ENCODE measurements at regions of chr5 and their contacts with region 1.

Region 1: DNA sequence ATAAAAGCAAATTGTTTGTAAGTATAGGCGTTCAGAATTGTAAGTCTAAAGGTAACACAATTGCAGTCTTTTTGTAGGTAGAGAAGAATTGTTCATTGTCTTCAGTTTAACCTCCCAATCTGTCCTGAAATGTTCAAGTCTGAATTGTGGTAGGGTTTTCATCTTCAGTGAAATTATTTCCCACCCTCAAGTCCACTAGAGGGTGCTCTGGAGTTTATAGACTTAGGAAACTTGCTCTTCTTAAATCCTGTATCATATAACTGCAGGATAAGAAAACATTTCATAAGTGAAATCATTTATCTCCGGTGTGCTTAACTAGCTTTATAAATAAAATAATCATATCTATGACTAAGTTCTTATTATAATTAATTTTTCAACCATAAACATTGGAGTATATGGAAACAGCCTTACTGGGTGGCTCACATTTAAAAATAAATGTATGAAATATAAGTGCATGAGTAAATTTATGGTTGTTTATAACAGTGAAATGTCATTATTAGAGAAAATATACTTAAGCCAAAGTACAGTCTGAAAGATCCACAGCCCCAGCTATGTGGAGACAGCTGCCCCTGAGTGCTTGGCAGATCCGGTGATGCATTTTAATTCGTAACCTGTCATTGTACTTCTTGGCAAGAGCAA is 182.4 kb upstream of the OTULINL start:
- DNase-seq: no peak
- ATAC-seq: peak in 3 of 8 donors; percentile 34 to 58 (median 53)
- H3K4me3 ChIP-seq: no peak overlapping the region
- H3K27ac ChIP-seq: peak overlapping the region in 2 of 10 donors; percentile 40 to 48
- H3K4me1 ChIP-seq: peaks cover 0 to 30% (median 14%) of the 10 kb centered on the region in 9 donors
- H3K27me3 ChIP-seq: no peaks in the 10 kb centered on the region
- CTCF ChIP-seq: peak; percentile 48 to 84 (median 75)

Region 2: GRCh38 chr5:13921578-13921977 is 477.6 kb before region 1 on chr5:
- intact Hi-C with region 1: no loop called
- DNase-seq: no peak
- ATAC-seq: no peak
- H3K4me3 ChIP-seq: no peak overlapping the region
- H3K27ac ChIP-seq: no peak overlapping the region
- H3K4me1 ChIP-seq: no peaks in the 10 kb centered on the region
- H3K27me3 ChIP-seq: no peaks in the 10 kb centered on the region
- CTCF ChIP-seq: no peak

Region 3: GRCh38 chr5:14465116-14465515 is 65.9 kb after region 1 on chr5:
- intact Hi-C with region 1: loop called in 1 of 10 experiments (anchors 5 kb)
- DNase-seq: no peak
- ATAC-seq: no peak
- H3K4me3 ChIP-seq: no peak overlapping the region
- H3K27ac ChIP-seq: peak overlapping the region in 1 of 10 donors; percentile 71
- H3K4me1 ChIP-seq: peaks cover 0 to 25% (median 0%) of the 10 kb centered on the region in 9 donors
- H3K27me3 ChIP-seq: no peaks in the 10 kb centered on the region
- CTCF ChIP-seq: no peak

Region 4: GRCh38 chr5:14489642-14490041 is 90.5 kb after region 1 on chr5:
- intact Hi-C with region 1: loop called in 1 of 10 experiments (anchors 10 kb)
- DNase-seq: no peak
- ATAC-seq: peak in 1 of 8 donors; percentile 19
- H3K4me3 ChIP-seq: no peak overlapping the region
- H3K27ac ChIP-seq: peak overlapping the region in 3 of 10 donors; percentile 4 to 68 (median 49)
- H3K4me1 ChIP-seq: peaks cover 3 to 34% (median 12%) of the 10 kb centered on the region in 9 donors
- H3K27me3 ChIP-seq: no peaks in the 10 kb centered on the region
- CTCF ChIP-seq: no peak

Region 5: DNA sequence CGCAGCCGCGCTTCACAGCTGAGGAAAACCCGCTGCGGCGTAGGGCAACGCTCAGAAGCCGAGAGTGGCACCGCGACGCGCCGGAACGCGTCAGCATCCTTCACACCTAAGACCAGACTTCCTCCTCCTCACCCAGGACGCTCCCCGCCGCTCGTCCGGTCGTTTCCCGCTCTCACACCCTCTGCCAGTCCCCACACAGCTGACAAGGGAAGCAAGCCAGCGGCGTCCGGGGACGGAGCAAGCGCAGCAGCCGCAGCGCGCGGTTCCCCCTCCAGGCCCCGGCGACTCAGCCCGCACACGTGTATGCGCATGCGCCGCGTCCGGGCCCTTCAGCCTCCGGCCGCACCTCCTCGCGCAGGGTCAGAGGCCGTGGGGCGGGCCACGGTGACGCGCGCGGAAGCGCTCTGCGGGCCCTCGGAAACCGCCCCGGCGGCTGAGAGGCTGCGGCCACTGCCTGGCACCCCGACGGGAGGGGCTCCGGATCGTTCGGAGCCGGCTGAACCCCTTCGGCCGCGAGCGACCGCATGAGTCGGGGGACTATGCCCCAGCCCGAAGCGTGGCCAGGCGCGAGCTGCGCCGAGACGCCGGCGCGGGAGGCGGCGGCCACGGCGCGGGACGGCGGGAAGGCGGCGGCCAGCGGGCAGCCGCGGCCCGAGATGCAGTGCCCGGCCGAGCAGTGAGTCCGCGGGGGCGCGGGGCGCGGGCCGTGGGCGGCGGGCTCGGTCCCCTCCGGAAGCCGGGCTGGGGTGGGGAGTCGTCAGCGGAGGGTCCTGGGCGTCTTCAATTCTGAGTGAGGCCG is 265.3 kb after region 1 on chr5 and contains the start of gene OTULIN:
- intact Hi-C with region 1: loop called in 2 of 10 experiments (anchors 5 to 10 kb)
- DNase-seq: peak; percentile 90 to 93
- ATAC-seq: peak; percentile 94 to 98 (median 97)
- H3K4me3 ChIP-seq: peak within 1 kb of the TSS; percentile 57 to 82 (median 68)
- H3K27ac ChIP-seq: peak within 1 kb of the TSS; percentile 86 to 98 (median 94)
- H3K4me1 ChIP-seq: peaks cover 6 to 53% (median 40%) of the 10 kb centered on the region in 9 donors
- H3K27me3 ChIP-seq: no peaks in the 10 kb centered on the region
- CTCF ChIP-seq: no peak
- total RNA-seq, gene OTULIN: 15.2 to 35.1 (median 25.9) TPM

Measured in heart right ventricle (tissue), 16 donors.